OCI-LY7 (cell line): ENCODE measurements at regions of chr12 and their contacts with region 1.

Region 1: DNA sequence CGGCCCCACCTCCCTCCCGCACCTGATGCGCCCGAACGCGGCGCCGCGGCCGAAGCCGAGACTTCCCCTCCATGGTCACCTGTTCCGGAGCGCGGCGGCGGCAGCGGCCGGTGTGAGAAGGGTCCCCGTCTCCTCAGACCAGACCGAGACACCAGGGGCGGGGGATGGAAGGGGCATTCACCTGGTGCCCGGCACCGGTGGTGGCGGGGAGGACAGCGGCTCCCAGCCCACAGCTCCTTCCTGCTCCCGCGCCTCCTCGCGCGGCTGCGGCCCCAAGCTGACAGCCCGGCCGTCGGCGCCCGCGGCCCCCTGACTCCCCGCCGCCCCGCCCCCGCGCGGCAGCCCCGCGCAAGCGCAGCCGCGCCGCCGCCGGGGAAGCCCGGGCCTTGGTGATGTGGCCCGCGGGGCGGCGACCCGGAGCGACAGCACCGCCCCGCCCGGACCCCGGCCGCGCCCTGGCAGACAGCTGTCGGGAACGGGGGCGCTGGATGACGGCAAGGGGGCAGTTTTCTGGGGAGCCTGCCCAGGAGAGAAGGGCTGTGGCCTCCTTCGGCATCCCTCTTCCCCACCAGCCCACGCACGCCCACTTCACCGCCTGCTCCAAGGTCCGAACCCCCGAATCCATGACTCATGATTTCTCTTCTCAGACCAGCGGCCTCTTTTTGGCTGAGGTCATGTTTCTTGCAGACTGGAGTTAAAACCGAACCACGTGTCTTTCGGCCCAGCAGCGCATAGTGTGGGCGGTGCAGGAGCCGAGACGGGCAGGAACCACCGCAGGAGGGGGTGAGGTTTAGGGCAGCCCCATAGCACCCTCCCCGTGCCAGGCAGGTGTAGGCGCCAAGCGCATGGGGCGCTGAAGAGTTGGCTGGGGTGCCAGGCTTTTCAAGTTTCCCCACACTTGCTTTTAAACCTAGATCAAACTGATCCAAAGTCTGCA is at the start of gene SLC41A2:
- DNase-seq: peak; percentile 84
- H3K4me3 ChIP-seq: peak within 1 kb of the TSS; percentile 78
- H3K27ac ChIP-seq: peak within 1 kb of the TSS; percentile 22
- H3K4me1 ChIP-seq: peaks cover 22% of the 10 kb centered on the region
- CTCF ChIP-seq: peak; percentile 64
- total RNA-seq, gene SLC41A2: 4.6 and 5.3 TPM in 2 replicates

Region 2: DNA sequence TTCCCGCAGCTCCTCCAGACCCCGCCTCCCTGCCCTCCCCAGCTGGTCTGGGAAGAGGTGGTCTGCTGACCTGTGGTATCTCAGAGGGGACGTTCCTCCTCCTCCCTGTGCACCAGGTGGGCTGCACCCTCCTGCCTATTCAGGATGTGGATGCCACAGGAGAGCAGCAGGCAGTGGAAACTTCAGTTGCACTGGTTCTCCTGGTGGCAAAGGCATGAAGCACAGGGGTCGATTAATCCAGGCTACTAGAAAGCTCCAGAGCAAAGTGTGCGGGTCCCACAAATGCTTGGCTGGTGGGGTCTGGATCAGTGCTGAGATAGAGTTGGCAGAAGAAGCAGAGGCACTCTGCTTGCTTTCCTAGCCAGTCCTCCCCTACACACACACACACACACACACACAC is 197.2 kb before region 1 on chr12:
- CTCF ChIA-PET with region 1: no interaction called
- POLR2A ChIA-PET with region 1: no interaction called
- intact Hi-C with region 1: no loop called
- DNase-seq: no peak
- H3K4me3 ChIP-seq: no peak overlapping the region
- H3K27ac ChIP-seq: no peak overlapping the region
- H3K4me1 ChIP-seq: peaks cover 15% of the 10 kb centered on the region
- CTCF ChIP-seq: no peak

Region 3: GRCh38 chr12:104930388-104931326 is 27.6 kb before region 1 on chr12:
- CTCF ChIA-PET with region 1: no interaction called
- POLR2A ChIA-PET with region 1: no interaction called
- intact Hi-C with region 1: no loop called
- DNase-seq: no peak
- H3K4me3 ChIP-seq: no peak overlapping the region
- H3K27ac ChIP-seq: no peak overlapping the region
- H3K4me1 ChIP-seq: no peaks in the 10 kb centered on the region
- CTCF ChIP-seq: no peak

Region 4: GRCh38 chr12:104986022-104986941 is 28.0 kb after region 1 on chr12 and contains the start of gene NOPCHAP1:
- CTCF ChIA-PET with region 1: no interaction called
- POLR2A ChIA-PET with region 1: interaction called, 10 read pairs
- intact Hi-C with region 1: loop called (anchors 2 kb)
- DNase-seq: peak; percentile 86
- H3K4me3 ChIP-seq: peak within 1 kb of the TSS; percentile 78
- H3K27ac ChIP-seq: no peak within 1 kb of the TSS
- H3K4me1 ChIP-seq: peaks cover 33% of the 10 kb centered on the region
- CTCF ChIP-seq: no peak
- total RNA-seq, gene NOPCHAP1: 12.1 and 15.2 TPM in 2 replicates